ENCODE measurements at regions of chr10 and their contacts with region 1.

Region 1: GRCh38 chr10:103416436-103417147 is 20.2 kb downstream of the PDCD11 start:
- DNase-seq: peak; percentile 73 to 93 (median 78)
- H3K4me3 ChIP-seq: no peak overlapping the region
- H3K27ac ChIP-seq: peak overlapping the region in 2 of 5 donors; percentile 55 to 72
- H3K4me1 ChIP-seq: peaks cover 4 to 8% of the 10 kb centered on the region in 2 donors
- H3K27me3 ChIP-seq: no peaks in the 10 kb centered on the region
- CTCF ChIP-seq: peak; percentile 60 to 90 (median 82)
- POLR2A ChIP-seq: no peak

Region 2: GRCh38 chr10:103244663-103245271 is 171.8 kb before region 1 on chr10:
- intact Hi-C with region 1: no loop called
- DNase-seq: peak; percentile 76 to 93 (median 78)
- H3K4me3 ChIP-seq: no peak overlapping the region
- H3K27ac ChIP-seq: no peak overlapping the region
- H3K4me1 ChIP-seq: peaks cover 5 to 6% of the 10 kb centered on the region in 2 donors
- H3K27me3 ChIP-seq: no peaks in the 10 kb centered on the region
- CTCF ChIP-seq: peak; percentile 86 to 93 (median 92)
- POLR2A ChIP-seq: no peak

Region 3: GRCh38 chr10:103295374-103296015 is 121.1 kb before region 1 on chr10:
- intact Hi-C with region 1: no loop called
- DNase-seq: no peak
- H3K4me3 ChIP-seq: no peak overlapping the region
- H3K27ac ChIP-seq: no peak overlapping the region
- H3K4me1 ChIP-seq: no peaks in the 10 kb centered on the region
- H3K27me3 ChIP-seq: no peaks in the 10 kb centered on the region
- CTCF ChIP-seq: no peak
- POLR2A ChIP-seq: no peak

Region 4: GRCh38 chr10:103481974-103482531 is 65.5 kb after region 1 on chr10:
- intact Hi-C with region 1: loop called (anchors 2 kb)
- DNase-seq: peak in 3 of 7 donors; percentile 40 to 62 (median 61)
- H3K4me3 ChIP-seq: no peak overlapping the region
- H3K27ac ChIP-seq: no peak overlapping the region
- H3K4me1 ChIP-seq: peaks cover 4 to 16% of the 10 kb centered on the region in 2 donors
- H3K27me3 ChIP-seq: no peaks in the 10 kb centered on the region
- CTCF ChIP-seq: peak; percentile 49 to 80 (median 68)
- POLR2A ChIP-seq: no peak

Region 5: GRCh38 chr10:103870516-103870915 is 453.9 kb after region 1 on chr10:
- intact Hi-C with region 1: no loop called
- DNase-seq: no peak
- H3K4me3 ChIP-seq: no peak overlapping the region
- H3K27ac ChIP-seq: no peak overlapping the region
- H3K4me1 ChIP-seq: no peaks in the 10 kb centered on the region
- H3K27me3 ChIP-seq: no peaks in the 10 kb centered on the region
- CTCF ChIP-seq: no peak
- POLR2A ChIP-seq: no peak

Measured in adrenal gland (tissue), 19 donors.